GM23248 (cell line): ENCODE measurements at regions of chr1 and their contacts with region 1.

Region 1: GRCh38 chr1:94863919-94864318 is 43.8 kb downstream of the SLC44A3 start:
- DNase-seq: peak; percentile 96
- H3K4me3 ChIP-seq: peak overlapping the region; percentile 69
- H3K27ac ChIP-seq: peak overlapping the region; percentile 97
- H3K4me1 ChIP-seq: peaks cover 47% of the 10 kb centered on the region
- H3K27me3 ChIP-seq: no peaks in the 10 kb centered on the region

Region 2: DNA sequence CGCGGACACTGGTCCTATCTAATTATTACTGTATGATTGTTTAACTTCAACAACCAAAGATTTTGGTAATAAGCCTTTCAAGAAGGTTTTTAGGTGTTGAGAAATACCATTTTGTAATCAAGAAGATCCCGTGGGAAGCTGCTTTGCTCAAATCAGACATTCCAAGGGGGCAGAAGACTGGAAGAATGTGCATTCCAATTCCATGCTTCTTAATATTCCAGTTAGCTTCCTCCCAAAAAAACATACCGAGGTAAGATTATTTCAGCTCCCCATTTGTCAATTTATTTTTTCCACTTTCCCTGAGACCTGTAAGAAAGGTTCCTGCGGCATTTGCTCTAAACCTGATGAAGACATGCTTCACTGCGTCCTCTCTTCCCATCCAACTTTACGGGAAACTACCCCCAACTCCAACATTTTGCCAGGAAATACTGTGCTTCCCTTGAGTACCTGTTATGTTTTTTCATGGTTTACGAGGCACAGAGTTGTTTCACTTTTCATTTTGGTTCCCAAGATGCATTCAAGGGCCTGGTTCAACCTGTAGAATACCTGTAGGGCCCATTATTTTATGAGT is 58.9 kb after region 1 on chr1:
- in situ Hi-C with region 1: loop called (anchors 5 kb)
- DNase-seq: peak; percentile 76
- H3K4me3 ChIP-seq: peak overlapping the region; percentile 95
- H3K27ac ChIP-seq: peak overlapping the region; percentile 82
- H3K4me1 ChIP-seq: peaks cover 62% of the 10 kb centered on the region
- H3K27me3 ChIP-seq: no peaks in the 10 kb centered on the region